Common myeloid progenitor, CD34-positive (primary cell): ENCODE measurements at regions of chr1 and their contacts with region 1.

Region 1: DNA sequence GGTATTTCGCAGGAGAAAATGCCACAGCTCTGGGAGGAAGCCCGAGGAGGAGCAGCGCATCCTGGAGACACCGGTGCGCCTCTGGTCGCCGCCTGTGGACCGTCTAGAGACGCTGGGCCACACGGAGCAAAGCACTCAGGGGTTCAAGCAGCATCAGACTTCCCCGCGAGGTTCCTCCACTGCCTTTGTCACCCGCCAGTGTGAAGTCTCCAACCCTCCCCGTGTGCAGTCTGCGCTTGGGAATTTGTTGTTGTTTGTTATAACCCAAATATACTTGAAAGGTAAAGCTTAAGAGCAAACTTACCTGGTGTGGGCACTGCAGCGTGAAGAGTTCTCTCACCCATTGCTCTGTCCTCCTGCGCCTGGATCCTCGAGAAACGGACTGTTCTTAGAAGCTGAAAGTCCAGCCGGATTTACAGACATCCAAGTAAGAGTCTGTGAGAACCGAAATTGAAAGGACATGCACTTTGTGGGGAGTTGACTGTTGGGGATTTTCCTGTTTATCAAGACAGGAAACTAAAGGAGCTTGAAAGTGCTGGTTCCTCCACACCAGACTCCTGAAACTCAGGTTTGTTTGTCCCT is at the start of gene GBP4:
- DNase-seq: peak; percentile 51 to 68 (median 65)
- H3K4me3 ChIP-seq: peak within 1 kb of the TSS; percentile 76 to 100 (median 93)
- H3K27ac ChIP-seq: peak within 1 kb of the TSS; percentile 88 to 90
- H3K4me1 ChIP-seq: peaks cover 26 to 62% (median 35%) of the 10 kb centered on the region in 4 experiments
- H3K27me3 ChIP-seq: no peaks in the 10 kb centered on the region

Region 2: DNA sequence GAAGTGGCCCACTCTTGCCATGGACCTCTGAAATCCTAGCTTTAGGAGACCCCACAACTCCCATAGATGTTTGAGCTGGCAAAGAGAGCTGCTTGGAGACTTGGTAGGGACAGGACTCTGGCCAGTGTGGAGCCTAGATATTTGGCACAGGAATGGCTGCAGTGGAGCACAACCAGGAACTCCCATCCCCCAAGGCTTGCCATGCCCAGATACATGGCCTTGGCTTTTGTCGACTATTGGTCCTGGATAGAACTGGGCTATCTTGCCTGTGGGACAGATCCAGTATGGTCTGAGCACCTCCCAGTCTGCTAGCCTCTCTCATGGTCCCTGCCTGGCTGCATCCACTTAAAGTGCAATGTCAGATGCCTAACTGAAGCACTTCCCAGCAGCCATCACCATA is 64.8 kb before region 1 on chr1:
- CTCF ChIA-PET with region 1: no interaction called
- POLR2A ChIA-PET with region 1: no interaction called
- DNase-seq: no peak
- H3K4me3 ChIP-seq: no peak overlapping the region
- H3K27ac ChIP-seq: no peak overlapping the region
- H3K4me1 ChIP-seq: peaks cover 12 to 17% (median 16%) of the 10 kb centered on the region in 4 experiments
- H3K27me3 ChIP-seq: no peaks in the 10 kb centered on the region

Region 3: DNA sequence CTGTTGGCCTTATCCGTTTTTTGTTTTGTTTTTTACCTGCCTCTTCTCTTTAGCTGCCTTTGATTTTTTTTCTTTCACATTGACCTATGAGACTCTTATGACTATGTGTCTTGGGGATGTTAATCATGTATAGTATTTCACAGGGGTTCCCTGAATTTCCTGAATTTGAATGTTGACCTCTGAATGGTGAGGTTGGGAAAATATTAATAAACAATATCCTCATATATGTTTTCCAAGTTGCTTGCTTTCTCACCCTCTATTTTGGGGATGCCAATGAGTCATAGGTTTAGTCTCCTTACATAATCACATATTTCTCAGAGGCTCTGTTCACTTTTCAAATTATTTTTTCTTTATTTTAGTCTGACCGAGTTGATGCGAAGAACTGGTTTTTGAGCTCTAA is 44.5 kb after region 1 on chr1:
- CTCF ChIA-PET with region 1: no interaction called
- POLR2A ChIA-PET with region 1: no interaction called
- DNase-seq: no peak
- H3K4me3 ChIP-seq: no peak overlapping the region
- H3K27ac ChIP-seq: no peak overlapping the region
- H3K4me1 ChIP-seq: no peaks in the 10 kb centered on the region
- H3K27me3 ChIP-seq: no peaks in the 10 kb centered on the region

Region 4: DNA sequence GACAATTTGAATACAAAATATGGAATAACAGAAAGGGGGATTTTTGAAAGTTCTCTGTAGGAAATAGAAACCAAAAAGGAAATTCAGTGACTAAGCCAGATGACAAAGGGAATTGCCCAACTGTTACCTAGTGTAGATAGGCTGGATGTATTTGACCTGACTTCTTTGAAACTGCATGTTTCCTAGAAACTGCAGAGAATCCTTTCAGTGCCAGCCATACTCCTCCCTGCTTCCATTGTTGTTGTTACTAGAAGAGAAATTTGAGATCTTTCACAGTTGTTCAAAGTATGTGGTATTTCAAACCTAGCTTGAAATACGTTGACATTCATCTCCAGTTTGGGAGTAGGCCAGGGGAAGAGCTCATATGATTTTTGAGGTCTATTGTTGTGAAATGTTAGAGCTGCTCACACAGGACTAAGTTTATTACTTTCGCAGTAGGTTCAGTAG is 75.9 kb after region 1 on chr1:
- CTCF ChIA-PET with region 1: interaction called, 11 read pairs
- POLR2A ChIA-PET with region 1: interaction called, 4 read pairs
- DNase-seq: peak; percentile 59 to 88 (median 86)
- H3K4me3 ChIP-seq: peak overlapping the region in 1 of 7 experiments; percentile 27
- H3K27ac ChIP-seq: peak overlapping the region; percentile 43 to 75
- H3K4me1 ChIP-seq: peaks cover 20 to 54% (median 34%) of the 10 kb centered on the region in 4 experiments
- H3K27me3 ChIP-seq: no peaks in the 10 kb centered on the region